ENCODE measurements at regions of chr16 and their contacts with region 1.

Region 1: DNA sequence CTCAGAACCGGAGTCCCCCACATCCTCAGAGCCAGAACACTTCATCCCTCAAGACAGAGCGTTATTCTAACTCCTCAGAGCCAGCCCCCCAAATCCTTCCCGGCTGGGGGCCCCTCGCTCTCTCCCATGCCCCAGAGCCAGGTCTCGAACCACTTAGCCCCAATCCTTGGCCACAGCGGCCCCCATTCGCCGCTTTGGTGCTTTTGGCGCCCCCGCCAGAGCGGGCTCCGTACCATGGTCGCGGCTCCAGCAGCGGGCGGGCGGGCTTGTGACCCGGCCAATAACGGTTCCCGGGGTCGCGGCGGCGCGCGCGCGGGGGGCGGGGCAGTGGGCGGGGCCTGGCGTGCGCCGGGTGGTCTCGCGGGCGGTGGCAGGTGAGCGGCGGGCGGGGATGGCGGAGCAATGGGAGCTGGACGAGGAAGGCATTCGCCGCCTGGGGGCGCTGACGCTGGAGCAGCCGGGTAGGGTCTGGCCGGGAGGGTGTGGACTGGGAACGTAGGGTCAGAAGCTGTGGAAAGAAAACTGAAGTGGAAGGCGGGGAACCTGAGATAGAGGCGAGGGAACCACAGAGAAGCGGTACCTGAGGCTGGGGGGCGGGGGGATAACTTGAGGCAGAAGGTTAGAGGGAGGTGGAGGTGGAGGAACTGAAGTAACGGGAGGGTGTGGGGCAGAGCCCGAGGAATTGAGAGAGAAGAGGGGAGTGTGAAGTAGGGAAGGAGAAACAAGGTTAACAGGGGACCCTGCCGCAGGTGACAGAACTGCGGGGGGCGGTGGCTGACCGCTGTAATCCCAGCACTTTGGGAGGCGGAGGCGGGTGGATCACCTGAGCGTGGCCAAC is at the starts of genes KCTD19 and LRRC36:
- DNase-seq: no peak
- H3K4me3 ChIP-seq: peak within 1 kb of the TSS; percentile 52
- CTCF ChIP-seq: peak; percentile 51

Region 2: DNA sequence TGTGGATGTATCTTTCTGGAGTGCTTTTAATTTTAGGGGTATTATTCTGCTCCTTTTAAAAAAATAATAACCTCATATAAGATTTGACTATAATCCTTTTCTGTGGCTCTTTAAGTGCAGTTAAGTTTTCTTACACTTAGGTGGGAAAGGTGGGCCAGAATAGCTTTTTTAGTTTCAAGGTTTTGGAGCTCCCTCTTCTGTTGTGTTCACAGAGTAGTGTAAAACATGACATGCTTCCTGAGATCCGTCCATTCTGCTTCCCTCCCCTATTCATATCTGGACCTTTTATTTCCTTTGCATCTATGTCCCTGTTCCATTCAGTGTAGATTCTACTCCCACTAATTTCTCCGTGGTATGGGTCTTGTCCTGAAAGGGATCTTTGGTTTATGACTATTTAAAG is 12.8 kb after region 1 on chr16:
- CTCF ChIA-PET with region 1: interaction called, 23 read pairs
- POLR2A ChIA-PET with region 1: no interaction called
- DNase-seq: no peak
- H3K4me3 ChIP-seq: no peak overlapping the region
- CTCF ChIP-seq: no peak

Measured in AG04449 (cell line).